ENCODE measurements at regions of chr2 and their contacts with region 1.

Region 1: GRCh38 chr2:218466016-218466521 is 47.1 kb downstream of the VIL1 start:
- DNase-seq: no peak
- H3K4me3 ChIP-seq: no peak overlapping the region
- H3K27ac ChIP-seq: no peak overlapping the region
- H3K4me1 ChIP-seq: no peaks in the 10 kb centered on the region
- H3K27me3 ChIP-seq: no peaks in the 10 kb centered on the region
- CTCF ChIP-seq: peak in 2 of 3 donors; percentile 32 to 44
- POLR2A ChIP-seq: no peak

Region 2: DNA sequence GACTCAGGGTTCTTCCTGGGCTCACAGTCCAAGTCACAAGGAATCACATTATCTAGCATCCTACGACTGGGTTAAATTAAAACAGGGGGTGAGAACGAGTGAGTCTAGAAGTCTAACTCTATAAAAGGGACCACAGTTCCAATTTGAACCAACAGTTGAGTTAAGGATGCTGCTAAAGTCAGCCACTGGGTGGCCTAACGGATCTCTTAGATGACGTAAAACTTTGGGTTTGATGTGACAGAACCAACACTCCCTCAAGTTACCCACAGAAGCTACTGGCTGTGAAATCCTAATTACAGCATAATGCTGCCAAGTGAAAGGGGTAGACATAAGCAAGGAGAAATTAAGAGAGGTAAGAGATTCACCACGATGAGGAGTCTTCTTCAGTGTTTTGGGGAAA is 429.7 kb before region 1 on chr2:
- intact Hi-C with region 1: loop called (anchors 5 kb)
- DNase-seq: no peak
- H3K4me3 ChIP-seq: no peak overlapping the region
- H3K27ac ChIP-seq: no peak overlapping the region
- H3K4me1 ChIP-seq: peaks cover 0 to 11% of the 10 kb centered on the region in 2 donors
- H3K27me3 ChIP-seq: no peaks in the 10 kb centered on the region
- CTCF ChIP-seq: no peak
- POLR2A ChIP-seq: no peak

Region 3: DNA sequence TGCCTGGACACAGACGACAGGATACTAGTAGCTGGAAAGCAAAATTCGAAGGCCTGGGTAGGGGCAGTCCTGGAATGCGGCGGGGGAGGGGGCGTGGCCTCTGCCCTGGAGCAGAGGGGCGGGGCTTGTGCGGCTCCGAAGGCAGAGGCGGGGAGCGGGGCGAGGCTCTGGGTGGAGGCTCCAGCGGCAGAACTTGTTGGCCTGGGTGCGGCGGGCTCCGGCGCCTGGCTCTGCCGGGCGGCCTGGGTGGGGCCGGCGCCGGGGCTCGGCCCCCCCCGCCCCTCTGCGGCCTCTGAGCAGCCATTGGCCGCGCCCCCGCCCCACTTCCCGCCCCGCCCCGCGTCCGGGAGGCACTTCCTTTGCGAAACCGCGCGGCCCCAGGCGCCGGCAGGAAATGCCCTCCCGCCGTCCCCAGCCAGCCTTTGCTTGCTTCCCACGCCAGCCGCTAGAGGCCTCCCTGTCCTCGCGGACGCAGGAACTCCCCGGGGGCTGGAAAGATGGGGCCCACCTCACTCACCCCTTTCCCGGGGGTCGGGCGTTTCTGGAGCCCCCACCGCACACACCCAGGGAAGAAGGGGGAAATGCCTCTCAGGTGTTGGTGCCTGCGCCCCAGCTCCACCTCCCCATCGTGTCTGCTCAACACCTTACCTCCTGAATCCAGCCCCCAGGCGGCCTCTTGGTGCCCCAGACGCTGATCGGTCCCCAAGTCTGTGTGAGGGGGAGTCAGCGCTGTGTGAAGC is 59.7 kb before region 1 on chr2:
- intact Hi-C with region 1: no loop called
- DNase-seq: peak; percentile 95 to 97
- H3K4me3 ChIP-seq: peak overlapping the region; percentile 37 to 71 (median 52)
- H3K27ac ChIP-seq: peak overlapping the region; percentile 85 to 91
- H3K4me1 ChIP-seq: peaks cover 12 to 16% of the 10 kb centered on the region in 2 donors
- H3K27me3 ChIP-seq: no peaks in the 10 kb centered on the region
- CTCF ChIP-seq: peak; percentile 58 to 86 (median 81)
- POLR2A ChIP-seq: no peak

Region 4: DNA sequence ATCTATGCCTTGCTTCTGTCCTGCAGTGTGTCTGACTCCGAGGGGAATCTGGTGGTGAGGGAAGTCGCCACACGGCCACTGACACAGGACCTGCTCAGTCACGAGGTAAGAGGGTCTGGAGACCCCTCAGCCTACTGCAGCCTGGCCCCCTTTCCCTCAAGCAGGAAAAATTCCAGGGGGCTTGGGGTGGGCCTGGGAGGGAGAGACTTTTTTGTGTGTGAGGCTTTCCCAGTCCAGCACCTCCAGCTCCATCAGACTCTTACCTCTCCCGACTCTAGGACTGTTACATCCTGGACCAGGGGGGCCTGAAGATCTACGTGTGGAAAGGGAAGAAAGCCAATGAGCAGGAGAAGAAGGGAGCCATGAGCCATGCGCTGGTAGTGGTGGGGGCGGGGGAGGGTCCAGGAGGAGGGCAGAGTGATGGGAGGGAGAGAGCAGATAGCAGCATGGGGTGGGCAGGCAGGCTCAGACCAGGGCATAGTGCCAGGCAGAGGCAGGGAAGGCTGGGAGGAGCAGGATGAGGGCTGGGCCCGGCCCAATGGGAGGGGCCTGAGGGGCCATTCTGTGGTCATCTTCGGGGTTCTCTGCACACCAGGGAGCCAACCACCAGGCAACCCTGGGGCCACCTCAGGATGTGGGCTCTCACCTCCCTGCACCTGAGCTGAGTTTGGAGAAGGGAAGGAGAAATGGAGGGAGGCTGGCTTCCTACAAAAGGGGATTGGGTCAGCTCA is 36.3 kb before region 1 on chr2:
- intact Hi-C with region 1: no loop called
- DNase-seq: no peak
- H3K4me3 ChIP-seq: no peak overlapping the region
- H3K27ac ChIP-seq: no peak overlapping the region
- H3K4me1 ChIP-seq: no peaks in the 10 kb centered on the region
- H3K27me3 ChIP-seq: no peaks in the 10 kb centered on the region
- CTCF ChIP-seq: no peak
- POLR2A ChIP-seq: no peak